ENCODE measurements at regions of chr6 and their contacts with region 1.

Region 1: DNA sequence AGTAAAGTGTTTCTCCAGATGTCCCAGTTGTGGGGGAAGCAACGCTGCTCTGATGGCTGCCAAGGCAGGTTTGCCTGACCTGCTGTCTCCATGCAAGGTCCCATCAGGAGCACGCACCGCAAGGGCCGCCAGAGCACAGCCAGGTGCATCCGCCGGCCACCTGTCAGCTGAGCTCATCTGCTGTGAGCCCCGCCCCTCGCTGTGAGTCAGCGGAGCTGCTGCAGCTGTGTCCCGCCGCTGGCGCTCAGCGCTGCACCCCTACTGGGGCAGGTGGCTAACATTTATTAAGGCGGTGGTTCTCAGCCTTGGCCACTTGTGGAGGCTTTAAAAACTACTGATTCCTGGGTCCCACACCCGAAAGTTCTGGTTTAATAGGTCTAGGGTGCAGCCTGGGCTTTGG is 225.7 kb downstream of the UST start:
- DNase-seq: no peak
- ATAC-seq: no peak
- H3K4me3 ChIP-seq: no peak overlapping the region
- H3K27ac ChIP-seq: no peak overlapping the region
- H3K4me1 ChIP-seq: peaks cover 28% of the 10 kb centered on the region
- H3K27me3 ChIP-seq: no peaks in the 10 kb centered on the region
- CTCF ChIP-seq: no peak
- POLR2A ChIP-seq: no peak
- RAD21 ChIP-seq: no peak

Region 2: DNA sequence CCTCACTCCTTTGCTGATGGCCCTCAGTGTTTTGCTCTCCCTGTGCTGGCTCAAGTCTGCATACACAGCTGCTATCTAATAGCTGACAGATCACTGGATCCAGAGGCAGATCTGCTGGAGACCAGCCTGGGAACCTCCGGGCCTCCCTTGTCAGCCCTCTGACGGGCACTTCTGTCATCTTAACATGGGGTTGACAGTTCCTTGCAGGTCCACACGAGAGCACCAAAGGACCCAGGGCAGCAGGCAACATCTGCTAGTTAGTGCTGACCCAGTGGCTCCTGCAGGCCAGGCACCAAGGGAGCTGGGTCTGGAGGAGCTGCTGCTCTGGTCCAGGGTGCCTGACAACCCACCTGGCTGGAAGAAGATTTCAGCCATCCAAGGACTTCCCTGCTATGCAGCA is 17.5 kb before region 1 on chr6:
- CTCF ChIA-PET with region 1: interaction called, 3 read pairs
- POLR2A ChIA-PET with region 1: no interaction called
- dilution Hi-C with region 1: no loop called
- in situ Hi-C with region 1: no loop called
- intact Hi-C with region 1: loop called (anchors 2 kb)
- DNase-seq: no peak
- ATAC-seq: 0 out of 2 replicates have a peak, but pooled peaks have one; percentile 13
- H3K4me3 ChIP-seq: no peak overlapping the region
- H3K27ac ChIP-seq: no peak overlapping the region
- H3K4me1 ChIP-seq: peaks cover 9% of the 10 kb centered on the region
- H3K27me3 ChIP-seq: no peaks in the 10 kb centered on the region
- CTCF ChIP-seq: no peak
- POLR2A ChIP-seq: no peak
- RAD21 ChIP-seq: no peak

Region 3: GRCh38 chr6:149012040-149012545 is 39.6 kb after region 1 on chr6:
- CTCF ChIA-PET with region 1: no interaction called
- POLR2A ChIA-PET with region 1: no interaction called
- dilution Hi-C with region 1: no loop called
- in situ Hi-C with region 1: no loop called
- intact Hi-C with region 1: loop called (anchors 5 kb)
- DNase-seq: peak; percentile 100
- ATAC-seq: peak; percentile 81
- H3K4me3 ChIP-seq: no peak overlapping the region
- H3K27ac ChIP-seq: no peak overlapping the region
- H3K4me1 ChIP-seq: peaks cover 20% of the 10 kb centered on the region
- H3K27me3 ChIP-seq: no peaks in the 10 kb centered on the region
- CTCF ChIP-seq: no peak
- POLR2A ChIP-seq: peak; percentile 39; the same call in 1 of the 2 replicates
- RAD21 ChIP-seq: no peak

Region 4: GRCh38 chr6:149170564-149171452 is 198.3 kb after region 1 on chr6:
- CTCF ChIA-PET with region 1: no interaction called
- POLR2A ChIA-PET with region 1: no interaction called
- dilution Hi-C with region 1: no loop called
- in situ Hi-C with region 1: no loop called
- intact Hi-C with region 1: no loop called
- DNase-seq: no peak
- ATAC-seq: no peak
- H3K4me3 ChIP-seq: no peak overlapping the region
- H3K27ac ChIP-seq: no peak overlapping the region
- H3K4me1 ChIP-seq: no peaks in the 10 kb centered on the region; the same call in 1 of the 2 replicates
- H3K27me3 ChIP-seq: peaks cover 33% of the 10 kb centered on the region
- CTCF ChIP-seq: no peak
- POLR2A ChIP-seq: no peak
- RAD21 ChIP-seq: no peak